ENCODE measurements at regions of chr1 and their contacts with region 1.

Region 1: GRCh38 chr1:167715157-167715999 is 6.4 kb upstream of the MPZL1 start:
- DNase-seq: peak; percentile 78 to 91 (median 90)
- H3K4me3 ChIP-seq: peak overlapping the region; percentile 76
- H3K27ac ChIP-seq: peak overlapping the region; percentile 75 to 77
- H3K4me1 ChIP-seq: no peaks in the 10 kb centered on the region
- H3K27me3 ChIP-seq: no peaks in the 10 kb centered on the region
- CTCF ChIP-seq: peak; percentile 70 to 83 (median 77)
- EP300 ChIP-seq: no peak
- POLR2A ChIP-seq: no peak

Region 2: DNA sequence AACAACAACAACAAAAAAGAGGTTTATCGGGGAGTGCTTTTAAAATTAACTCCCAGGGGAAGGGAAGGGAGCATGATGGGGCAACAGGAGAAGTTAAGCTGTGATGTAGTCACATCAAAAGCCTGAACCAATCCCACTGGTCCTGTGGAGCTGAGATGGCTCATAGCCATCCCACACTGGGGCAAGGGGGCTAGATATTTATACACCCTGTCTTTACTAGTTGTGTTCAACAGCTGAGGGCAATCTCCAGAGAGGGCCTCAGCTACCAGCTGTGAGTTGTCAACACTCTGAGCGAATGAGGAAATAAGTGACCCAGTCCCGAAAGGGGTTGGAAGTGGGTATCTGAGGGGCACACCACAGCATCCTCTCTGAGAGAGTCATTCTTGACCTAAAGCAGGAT is 130.8 kb before region 1 on chr1:
- intact Hi-C with region 1: no loop called
- DNase-seq: no peak
- H3K4me3 ChIP-seq: no peak overlapping the region
- H3K27ac ChIP-seq: no peak overlapping the region
- H3K4me1 ChIP-seq: no peaks in the 10 kb centered on the region
- H3K27me3 ChIP-seq: no peaks in the 10 kb centered on the region
- CTCF ChIP-seq: no peak
- EP300 ChIP-seq: no peak
- POLR2A ChIP-seq: no peak

Region 3: DNA sequence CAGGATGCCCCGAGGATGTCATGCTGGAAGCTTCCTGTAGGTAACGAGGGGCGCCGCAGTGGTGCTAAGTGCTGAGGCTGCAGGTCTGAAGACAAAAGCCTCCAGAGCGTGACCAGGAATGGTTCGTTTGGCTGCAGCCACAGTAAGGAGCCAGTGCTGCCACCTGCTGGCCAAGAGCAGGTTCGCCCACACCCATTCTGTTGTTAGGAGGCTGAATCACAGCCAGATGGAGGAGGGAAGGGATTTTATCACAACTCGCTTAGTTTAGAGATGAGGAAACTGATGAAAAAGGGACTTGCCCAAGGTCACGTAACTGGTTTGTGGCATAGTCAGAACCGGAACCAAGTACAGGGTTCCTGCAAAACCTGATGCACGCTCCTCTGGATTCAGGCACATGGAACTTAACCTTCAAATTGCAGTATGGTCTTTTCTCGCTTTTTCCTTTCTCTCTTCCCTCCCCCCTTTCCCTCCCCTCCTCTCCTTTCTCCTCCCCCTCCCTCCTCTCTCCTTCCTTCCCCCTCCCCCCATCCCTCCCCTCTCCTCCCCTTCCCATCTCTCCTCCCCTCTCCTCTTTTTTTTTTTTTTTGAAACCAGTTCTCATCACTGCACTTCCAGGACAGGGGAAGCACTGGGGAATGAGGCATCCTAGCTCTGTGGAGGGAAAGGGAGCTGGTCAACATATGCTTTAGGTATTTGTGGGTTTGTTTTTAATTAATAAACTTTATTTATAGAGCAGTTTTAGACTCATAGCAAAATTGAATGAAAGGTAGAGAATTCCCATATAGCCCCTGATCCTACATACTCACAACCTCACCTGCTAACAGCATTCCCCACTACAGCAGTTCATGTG is 88.2 kb after region 1 on chr1:
- intact Hi-C with region 1: loop called in 3 of 4 experiments (anchors 5 kb)
- DNase-seq: peak; percentile 86 to 94 (median 92)
- H3K4me3 ChIP-seq: no peak overlapping the region
- H3K27ac ChIP-seq: no peak overlapping the region
- H3K4me1 ChIP-seq: peaks cover 2% of the 10 kb centered on the region
- H3K27me3 ChIP-seq: no peaks in the 10 kb centered on the region
- CTCF ChIP-seq: peak; percentile 79 to 97 (median 83)
- EP300 ChIP-seq: no peak
- POLR2A ChIP-seq: no peak

Region 4: DNA sequence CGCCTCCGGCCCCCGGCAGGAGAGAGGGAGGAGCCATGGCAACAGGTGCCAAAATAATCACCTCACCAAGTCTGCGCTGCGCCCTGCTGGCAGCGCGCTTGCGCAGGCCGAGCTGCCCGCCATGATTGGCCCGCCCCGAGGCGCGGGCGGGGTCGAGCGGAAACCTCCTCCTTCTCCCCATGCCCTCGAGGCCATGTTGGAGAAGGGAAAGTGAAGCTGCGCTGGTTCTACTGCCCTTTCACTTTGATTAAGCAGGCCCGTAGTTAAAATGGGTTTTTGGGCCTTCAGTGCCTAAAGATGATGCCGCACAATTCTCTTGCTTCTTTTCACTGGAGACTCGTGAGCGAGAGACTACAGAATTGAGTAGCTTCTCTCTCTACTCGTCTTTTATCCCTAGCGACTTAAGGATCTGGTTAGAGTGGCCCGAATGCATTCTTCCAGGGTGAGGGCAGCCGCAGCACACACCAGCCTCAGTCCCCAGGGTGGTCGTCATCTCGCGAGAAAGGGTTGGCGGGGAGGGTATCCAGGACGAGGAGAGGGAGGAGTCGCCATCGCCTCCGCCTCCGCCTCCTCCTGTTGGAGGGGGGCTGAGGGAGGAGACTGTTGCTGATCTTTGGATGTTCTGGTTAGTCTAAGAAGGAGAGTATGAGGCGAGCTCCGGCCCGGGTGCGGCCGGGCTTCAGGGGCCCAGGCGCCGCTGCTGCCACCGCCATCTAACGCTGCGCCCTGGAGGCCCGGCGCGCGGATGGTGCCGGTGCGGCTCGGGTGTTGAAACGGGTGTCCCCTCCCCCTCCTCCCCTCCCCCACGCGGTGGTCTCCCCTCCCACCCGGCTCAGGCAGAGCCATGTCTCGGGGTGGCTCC is 220.9 kb after region 1 on chr1 and contains the start of gene DCAF6:
- intact Hi-C with region 1: loop called in 2 of 4 experiments (anchors 5 kb)
- DNase-seq: peak; percentile 97 to 99 (median 98)
- H3K4me3 ChIP-seq: peak within 1 kb of the TSS; percentile 97
- H3K27ac ChIP-seq: peak within 1 kb of the TSS; percentile 86 to 94
- H3K4me1 ChIP-seq: peaks cover 2% of the 10 kb centered on the region
- H3K27me3 ChIP-seq: no peaks in the 10 kb centered on the region
- CTCF ChIP-seq: no peak
- EP300 ChIP-seq: no peak
- POLR2A ChIP-seq: peak; percentile 94
- total RNA-seq, gene DCAF6: 38.3 to 65.9 (median 44.4) TPM

Region 5: GRCh38 chr1:168032029-168032428 is 316.7 kb after region 1 on chr1:
- intact Hi-C with region 1: no loop called
- DNase-seq: no peak
- H3K4me3 ChIP-seq: no peak overlapping the region
- H3K27ac ChIP-seq: no peak overlapping the region
- H3K4me1 ChIP-seq: peaks cover 6% of the 10 kb centered on the region
- H3K27me3 ChIP-seq: no peaks in the 10 kb centered on the region
- CTCF ChIP-seq: no peak
- EP300 ChIP-seq: no peak
- POLR2A ChIP-seq: no peak

Region 6: DNA sequence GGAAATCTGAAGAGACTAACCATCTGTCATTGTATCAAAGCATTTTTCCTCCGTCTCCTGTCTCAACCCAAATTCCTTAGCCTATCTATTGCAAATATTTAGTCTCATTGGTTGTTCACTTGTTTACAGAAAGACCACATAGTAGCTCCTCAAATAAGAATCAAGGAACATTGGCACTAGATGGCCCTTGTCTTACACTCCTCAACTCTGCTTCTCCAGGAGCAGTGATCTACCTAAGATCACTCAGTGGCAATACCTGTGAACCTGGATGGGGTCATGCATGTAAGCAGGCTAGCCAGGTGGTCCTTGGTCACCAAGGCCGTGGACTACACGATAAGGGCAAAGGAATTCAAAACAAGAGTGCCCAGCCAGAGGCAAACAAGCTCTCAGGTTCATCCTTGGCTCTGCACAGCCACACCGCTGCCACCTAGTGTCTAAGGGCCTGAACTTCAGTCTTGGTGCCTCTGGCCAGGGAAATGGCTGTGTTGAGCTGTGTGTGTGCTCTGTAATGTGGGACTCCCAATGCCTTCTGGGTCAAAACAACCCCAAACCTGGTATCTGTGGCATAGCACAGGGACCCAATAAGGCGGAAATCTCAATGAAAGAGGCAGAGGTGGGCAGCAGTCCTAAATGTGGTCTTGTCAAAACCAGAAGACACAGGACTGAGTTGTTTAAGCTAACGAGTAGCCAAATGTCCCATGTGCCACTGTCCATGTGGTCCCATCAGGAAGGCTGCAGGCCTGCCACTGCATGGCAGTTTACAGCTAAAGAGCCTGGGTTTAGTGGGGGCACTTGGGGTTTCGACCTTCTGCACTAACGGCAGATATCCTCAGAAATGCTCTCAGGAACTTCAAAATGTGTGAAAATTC is 366.9 kb after region 1 on chr1:
- intact Hi-C with region 1: loop called in 1 of 4 experiments (anchors 10 kb)
- DNase-seq: peak; percentile 61 to 76 (median 71)
- H3K4me3 ChIP-seq: no peak overlapping the region
- H3K27ac ChIP-seq: no peak overlapping the region
- H3K4me1 ChIP-seq: peaks cover 10% of the 10 kb centered on the region
- H3K27me3 ChIP-seq: no peaks in the 10 kb centered on the region
- CTCF ChIP-seq: peak; percentile 55 to 77 (median 58)
- EP300 ChIP-seq: no peak
- POLR2A ChIP-seq: no peak